ENCODE measurements at regions of chr7 and their contacts with region 1.

Region 1: DNA sequence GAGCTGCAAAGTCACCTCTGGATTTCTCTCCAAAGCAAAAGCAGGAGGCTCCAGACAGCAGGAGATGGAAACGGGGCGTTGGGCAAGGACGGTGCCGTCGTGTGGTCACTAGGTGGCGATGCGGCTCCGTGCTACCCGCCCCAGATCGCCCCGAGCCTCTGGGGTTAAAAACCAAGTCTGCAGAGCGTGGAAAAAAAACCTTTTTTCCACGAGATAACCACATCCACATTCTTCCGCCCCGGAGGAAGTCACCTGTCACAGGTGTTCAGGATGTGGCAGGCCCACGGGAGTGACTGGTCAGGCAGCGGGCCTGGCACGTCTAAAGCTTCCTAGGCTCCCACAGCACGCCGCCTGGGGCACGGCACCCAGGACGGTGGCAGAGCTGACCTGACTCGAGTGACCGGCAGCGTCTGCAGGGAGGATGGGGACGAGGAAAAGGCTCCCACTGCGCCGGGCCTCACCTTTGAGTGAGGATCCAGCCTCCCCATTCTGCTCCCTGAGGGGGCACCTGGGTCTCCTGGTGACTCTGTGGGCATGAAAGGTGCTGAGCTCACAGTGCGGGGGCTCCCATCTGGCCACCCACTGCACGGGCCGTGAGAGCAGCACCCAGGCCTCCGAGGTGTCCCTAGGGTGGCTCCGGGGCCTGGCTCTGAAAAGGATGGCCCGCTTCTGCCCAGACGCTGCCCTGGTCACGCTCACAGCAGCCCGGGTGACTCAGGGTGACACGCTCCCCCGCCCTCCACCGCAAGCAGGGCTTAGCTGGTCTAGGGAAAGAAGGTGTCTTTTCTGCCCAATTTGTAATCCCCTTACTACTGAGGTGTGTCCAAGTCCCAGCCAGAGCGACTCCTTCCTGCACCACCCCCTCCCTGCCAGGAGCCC is 71.3 kb upstream of the TNRC18 start:
- H3K4me3 Mint-ChIP-seq: peak overlapping the region; percentile 67
- H3K27ac Mint-ChIP-seq: peak overlapping the region; percentile 63
- H3K4me1 Mint-ChIP-seq: peaks cover 45% of the 10 kb centered on the region
- H3K27me3 Mint-ChIP-seq: no peaks in the 10 kb centered on the region

Region 2: GRCh38 chr7:5557920-5558401 is 63.0 kb after region 1 on chr7:
- intact Hi-C with region 1: loop called (anchors 1 kb)
- H3K4me3 Mint-ChIP-seq: peak overlapping the region; percentile 73
- H3K27ac Mint-ChIP-seq: peak overlapping the region; percentile 93
- H3K4me1 Mint-ChIP-seq: peaks cover 62% of the 10 kb centered on the region
- H3K27me3 Mint-ChIP-seq: no peaks in the 10 kb centered on the region

Region 3: DNA sequence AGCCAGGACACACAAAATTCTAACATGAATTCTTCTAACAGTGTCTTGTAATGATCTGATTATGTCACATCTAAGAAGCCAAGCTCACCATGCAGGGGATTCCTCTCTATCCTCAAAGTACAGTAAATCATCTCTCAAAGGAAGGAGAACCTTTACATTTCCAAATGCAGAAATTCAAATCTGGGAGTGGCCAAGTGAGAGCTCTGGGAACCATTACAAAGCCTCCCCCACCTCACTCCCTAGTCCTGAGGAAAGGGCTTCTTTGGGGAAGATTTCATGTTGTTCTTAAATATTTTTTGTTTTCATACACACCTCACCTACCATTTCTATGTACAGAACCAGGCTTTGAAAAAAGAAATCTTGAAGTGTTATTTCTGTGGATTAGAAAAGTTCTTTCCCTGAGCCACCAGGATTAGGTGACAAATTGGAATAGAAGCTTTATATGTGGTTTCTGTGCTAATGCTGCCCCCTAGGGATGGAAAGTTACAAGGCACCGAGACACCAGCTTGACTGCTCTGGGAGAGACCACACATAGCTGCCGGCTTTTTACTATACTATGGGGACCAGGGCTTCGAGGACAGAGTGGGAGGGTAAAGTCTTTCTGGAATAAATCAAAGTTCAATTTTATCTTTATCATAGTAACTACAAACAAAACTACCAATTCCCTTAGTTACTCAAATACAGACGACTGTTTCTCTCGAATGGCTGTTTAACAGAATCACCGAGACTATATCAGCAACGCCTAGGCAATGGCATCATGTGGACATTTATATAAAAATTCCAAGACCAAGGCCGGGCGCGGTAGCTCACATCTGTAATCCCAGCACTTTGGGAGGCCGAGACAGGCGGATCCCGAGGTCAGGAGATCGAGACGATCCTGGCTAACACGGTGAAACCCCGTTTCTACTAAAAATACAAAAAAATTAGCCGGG is 170.4 kb after region 1 on chr7:
- intact Hi-C with region 1: loop called (anchors 5 kb)
- H3K4me3 Mint-ChIP-seq: no peak overlapping the region
- H3K27ac Mint-ChIP-seq: no peak overlapping the region
- H3K4me1 Mint-ChIP-seq: peaks cover 59% of the 10 kb centered on the region
- H3K27me3 Mint-ChIP-seq: no peaks in the 10 kb centered on the region

Region 4: DNA sequence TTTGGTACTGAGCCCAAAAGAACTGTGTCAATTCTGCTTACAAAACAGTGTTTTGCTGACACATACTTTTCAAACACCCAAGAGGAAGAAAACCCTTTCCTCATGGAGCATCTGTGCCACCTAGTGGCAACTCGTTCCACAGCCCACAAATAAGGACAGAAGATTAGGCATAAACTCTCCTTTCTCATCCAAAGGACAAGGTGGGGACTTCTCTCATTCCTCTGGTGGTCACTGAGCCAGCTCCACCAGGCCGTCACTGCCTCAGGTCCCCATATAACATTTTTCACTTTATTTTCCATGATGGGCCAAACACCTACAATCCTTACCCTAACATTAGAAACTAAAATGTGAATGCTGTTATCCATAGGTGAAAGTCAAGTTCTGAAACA is 209.6 kb after region 1 on chr7:
- intact Hi-C with region 1: loop called (anchors 1 kb)
- H3K4me3 Mint-ChIP-seq: no peak overlapping the region
- H3K27ac Mint-ChIP-seq: no peak overlapping the region
- H3K4me1 Mint-ChIP-seq: peaks cover 44% of the 10 kb centered on the region
- H3K27me3 Mint-ChIP-seq: no peaks in the 10 kb centered on the region